ENCODE measurements at regions of chr11 and their contacts with region 1.

Region 1: GRCh38 chr11:114197799-114198500 is 98.2 kb upstream of the NNMT start:
- DNase-seq: no peak
- H3K4me3 ChIP-seq: peak overlapping the region in 1 of 2 donors; percentile 5
- H3K27ac ChIP-seq: peak overlapping the region; percentile 84
- H3K4me1 ChIP-seq: peaks cover 80% of the 10 kb centered on the region
- H3K27me3 ChIP-seq: no peaks in the 10 kb centered on the region
- CTCF ChIP-seq: no peak
- POLR2A ChIP-seq: no peak

Region 2: GRCh38 chr11:114159802-114160632 is 37.9 kb before region 1 on chr11:
- intact Hi-C with region 1: loop called (anchors 5 kb)
- DNase-seq: peak in 1 of 2 donors; percentile 98
- H3K4me3 ChIP-seq: peak overlapping the region; percentile 26 to 31
- H3K27ac ChIP-seq: peak overlapping the region; percentile 95
- H3K4me1 ChIP-seq: peaks cover 99% of the 10 kb centered on the region
- H3K27me3 ChIP-seq: no peaks in the 10 kb centered on the region
- CTCF ChIP-seq: no peak
- POLR2A ChIP-seq: peak in 1 of 2 donors; percentile 4